ENCODE measurements at regions of chr2 and their contacts with region 1.

Region 1: GRCh38 chr2:182763311-182763912 is 47.4 kb downstream of the DNAJC10 start:
- DNase-seq: peak; percentile 73
- ATAC-seq: peak; percentile 68; the same call in 1 of the 2 replicates
- H3K4me3 ChIP-seq: no peak overlapping the region
- H3K27ac ChIP-seq: no peak overlapping the region
- H3K4me1 ChIP-seq: no peaks in the 10 kb centered on the region
- H3K27me3 ChIP-seq: no peaks in the 10 kb centered on the region
- CTCF ChIP-seq: peak; percentile 59

Region 2: DNA sequence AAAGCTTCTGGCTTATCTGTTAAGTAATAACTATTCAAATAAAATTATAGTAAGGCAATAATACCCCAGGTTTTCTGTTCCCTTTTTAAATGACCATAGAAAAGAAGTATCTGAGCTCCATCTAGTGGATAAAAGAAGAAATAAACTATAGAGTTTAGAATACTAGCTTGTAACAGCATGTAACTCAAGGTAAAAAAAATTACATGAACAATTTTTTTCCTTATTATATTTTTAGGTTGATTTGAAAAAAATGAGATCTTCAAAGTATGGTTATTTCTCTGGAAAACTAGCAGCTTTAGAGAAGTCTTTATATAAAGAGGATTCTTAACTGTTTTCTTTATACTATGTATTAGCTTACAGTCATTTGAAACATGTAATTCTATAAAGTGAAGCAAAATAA is 216.7 kb after region 1 on chr2:
- CTCF ChIA-PET with region 1: no interaction called
- POLR2A ChIA-PET with region 1: no interaction called
- intact Hi-C with region 1: loop called (anchors 2 kb)
- DNase-seq: peak; percentile 69
- ATAC-seq: peak; percentile 49
- H3K4me3 ChIP-seq: no peak overlapping the region
- H3K27ac ChIP-seq: no peak overlapping the region
- H3K4me1 ChIP-seq: no peaks in the 10 kb centered on the region
- H3K27me3 ChIP-seq: no peaks in the 10 kb centered on the region
- CTCF ChIP-seq: peak; percentile 72

Region 3: DNA sequence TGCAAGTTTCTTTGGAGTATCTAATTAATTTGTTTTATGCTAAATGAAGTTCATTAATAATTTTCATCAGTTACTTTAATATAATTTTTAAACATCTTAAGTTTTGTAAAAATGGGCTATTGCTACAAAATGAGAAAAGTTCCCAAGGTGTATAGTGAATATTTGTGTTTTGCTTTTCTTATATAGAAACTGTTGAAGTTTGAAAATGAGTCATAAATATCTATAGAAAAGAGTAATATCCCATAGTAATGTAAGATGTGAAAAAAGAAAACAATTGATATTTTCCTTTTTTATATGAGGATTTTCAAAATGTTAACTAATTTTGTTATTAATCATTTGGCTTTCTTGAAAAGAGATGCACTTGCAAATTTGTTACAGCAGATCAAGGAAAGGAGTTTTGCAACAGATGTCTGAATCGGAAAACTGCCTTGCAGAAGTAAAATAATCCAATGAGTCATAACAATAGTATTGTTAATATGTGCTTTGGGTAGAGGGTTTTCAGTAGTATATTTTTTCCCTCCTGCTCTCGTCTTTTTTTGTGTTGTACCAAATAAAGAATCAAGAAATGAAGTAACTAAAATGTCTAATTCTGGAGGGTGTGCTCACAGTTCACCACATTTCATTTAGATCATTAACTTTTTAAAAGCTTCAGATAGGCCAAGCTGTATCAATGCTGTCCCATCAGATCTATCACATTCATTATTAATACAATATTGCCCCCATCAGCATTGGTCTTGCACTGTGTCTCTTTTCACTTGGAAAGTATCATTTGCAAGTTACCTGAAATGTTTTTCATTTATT is 330.6 kb after region 1 on chr2:
- CTCF ChIA-PET with region 1: no interaction called
- POLR2A ChIA-PET with region 1: no interaction called
- intact Hi-C with region 1: loop called (anchors 10 kb)
- DNase-seq: peak; percentile 52
- ATAC-seq: peak; percentile 78
- H3K4me3 ChIP-seq: no peak overlapping the region; the same call in 1 of the 2 replicates
- H3K27ac ChIP-seq: no peak overlapping the region
- H3K4me1 ChIP-seq: peaks cover 11% of the 10 kb centered on the region
- H3K27me3 ChIP-seq: no peaks in the 10 kb centered on the region
- CTCF ChIP-seq: peak; percentile 55

Region 4: GRCh38 chr2:183134016-183134415 is 370.6 kb after region 1 on chr2:
- CTCF ChIA-PET with region 1: no interaction called
- POLR2A ChIA-PET with region 1: no interaction called
- intact Hi-C with region 1: no loop called
- DNase-seq: no peak
- ATAC-seq: no peak
- H3K4me3 ChIP-seq: no peak overlapping the region
- H3K27ac ChIP-seq: no peak overlapping the region
- H3K4me1 ChIP-seq: no peaks in the 10 kb centered on the region
- H3K27me3 ChIP-seq: no peaks in the 10 kb centered on the region
- CTCF ChIP-seq: no peak

Region 5: GRCh38 chr2:183359867-183360266 is 596.5 kb after region 1 on chr2:
- CTCF ChIA-PET with region 1: no interaction called
- POLR2A ChIA-PET with region 1: no interaction called
- intact Hi-C with region 1: no loop called
- DNase-seq: peak; percentile 33
- ATAC-seq: no peak
- H3K4me3 ChIP-seq: no peak overlapping the region
- H3K27ac ChIP-seq: no peak overlapping the region
- H3K4me1 ChIP-seq: no peaks in the 10 kb centered on the region
- H3K27me3 ChIP-seq: no peaks in the 10 kb centered on the region
- CTCF ChIP-seq: peak; percentile 53